ENCODE measurements at regions of chr12 and their contacts with region 1.

Region 1: GRCh38 chr12:10968765-10969456 is 17.8 kb downstream of the TAS2R50 start:
- DNase-seq: peak in 2 of 5 donors; percentile 34 to 45
- ATAC-seq: peak in 3 of 4 donors; percentile 55 to 78 (median 67)
- H3K4me3 ChIP-seq: no peak overlapping the region
- H3K27ac ChIP-seq: no peak overlapping the region
- H3K4me1 ChIP-seq: peaks cover 0 to 13% (median 2%) of the 10 kb centered on the region in 12 donors
- H3K27me3 ChIP-seq: no peaks in the 10 kb centered on the region
- CTCF ChIP-seq: no peak
- POLR2A ChIP-seq: no peak

Region 2: GRCh38 chr12:11171145-11171968 is 202.4 kb after region 1 on chr12 and contains the start of gene SMIM10L1:
- intact Hi-C with region 1: loop called in 1 of 10 experiments (anchors 10 kb)
- DNase-seq: peak; percentile 94 to 96 (median 95)
- ATAC-seq: peak; percentile 99 to 100 (median 100)
- H3K4me3 ChIP-seq: peak within 1 kb of the TSS; percentile 44 to 97 (median 84)
- H3K27ac ChIP-seq: peak within 1 kb of the TSS; percentile 93 to 99 (median 98)
- H3K4me1 ChIP-seq: peaks cover 0 to 45% (median 34%) of the 10 kb centered on the region in 12 donors
- H3K27me3 ChIP-seq: no peaks in the 10 kb centered on the region
- CTCF ChIP-seq: peak in 1 of 12 donors; percentile 7
- POLR2A ChIP-seq: peak in 1 of 2 donors; percentile 71
- total RNA-seq, gene SMIM10L1: 13.0 to 24.5 (median 16.9) TPM

Region 3: DNA sequence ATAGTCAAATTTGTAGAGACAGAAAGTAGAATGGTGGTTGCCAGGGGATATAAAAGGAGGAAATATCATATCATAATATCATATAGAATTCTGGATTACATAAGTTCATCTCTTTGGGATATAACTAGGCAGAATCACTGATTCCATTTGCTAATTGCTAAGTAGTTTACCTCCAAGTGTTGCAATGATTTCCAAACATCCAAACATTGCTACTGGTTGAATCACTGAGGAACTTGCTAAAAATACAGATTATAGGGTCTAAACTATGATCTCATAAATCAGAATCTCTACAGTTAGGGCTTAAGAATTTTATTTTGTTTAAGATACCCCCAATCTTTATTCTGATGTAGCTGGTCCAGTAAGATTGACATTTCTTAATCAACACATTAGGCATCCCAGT is 233.9 kb after region 1 on chr12:
- intact Hi-C with region 1: loop called in 3 of 10 experiments (anchors 5 to 10 kb)
- DNase-seq: no peak
- ATAC-seq: no peak
- H3K4me3 ChIP-seq: no peak overlapping the region
- H3K27ac ChIP-seq: no peak overlapping the region
- H3K4me1 ChIP-seq: no peaks in the 10 kb centered on the region
- H3K27me3 ChIP-seq: no peaks in the 10 kb centered on the region
- CTCF ChIP-seq: no peak
- POLR2A ChIP-seq: no peak

Region 4: DNA sequence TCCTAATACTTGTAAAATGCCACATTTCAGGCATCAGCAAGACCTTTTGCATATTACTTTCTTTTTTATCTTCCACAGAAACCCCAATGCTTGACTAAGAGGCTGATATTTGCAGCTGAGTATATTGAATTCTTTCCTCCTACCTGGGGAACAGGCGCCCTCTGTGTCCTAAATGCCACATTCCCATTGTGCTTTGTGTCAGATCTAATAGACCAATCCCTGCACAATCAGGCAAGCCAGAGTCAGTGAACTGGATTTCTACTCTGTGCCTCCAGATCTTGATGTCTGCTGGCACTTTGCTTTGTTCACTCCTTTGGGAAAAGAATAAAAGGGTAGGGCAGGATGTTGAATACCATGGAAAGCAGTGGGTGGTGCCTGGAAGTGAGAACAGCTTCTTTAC is 240.2 kb after region 1 on chr12:
- intact Hi-C with region 1: loop called in 1 of 10 experiments (anchors 10 kb)
- DNase-seq: no peak
- ATAC-seq: no peak
- H3K4me3 ChIP-seq: no peak overlapping the region
- H3K27ac ChIP-seq: no peak overlapping the region
- H3K4me1 ChIP-seq: no peaks in the 10 kb centered on the region
- H3K27me3 ChIP-seq: no peaks in the 10 kb centered on the region
- CTCF ChIP-seq: no peak
- POLR2A ChIP-seq: no peak